ENCODE measurements at regions of chr17 and their contacts with region 1.

Region 1: DNA sequence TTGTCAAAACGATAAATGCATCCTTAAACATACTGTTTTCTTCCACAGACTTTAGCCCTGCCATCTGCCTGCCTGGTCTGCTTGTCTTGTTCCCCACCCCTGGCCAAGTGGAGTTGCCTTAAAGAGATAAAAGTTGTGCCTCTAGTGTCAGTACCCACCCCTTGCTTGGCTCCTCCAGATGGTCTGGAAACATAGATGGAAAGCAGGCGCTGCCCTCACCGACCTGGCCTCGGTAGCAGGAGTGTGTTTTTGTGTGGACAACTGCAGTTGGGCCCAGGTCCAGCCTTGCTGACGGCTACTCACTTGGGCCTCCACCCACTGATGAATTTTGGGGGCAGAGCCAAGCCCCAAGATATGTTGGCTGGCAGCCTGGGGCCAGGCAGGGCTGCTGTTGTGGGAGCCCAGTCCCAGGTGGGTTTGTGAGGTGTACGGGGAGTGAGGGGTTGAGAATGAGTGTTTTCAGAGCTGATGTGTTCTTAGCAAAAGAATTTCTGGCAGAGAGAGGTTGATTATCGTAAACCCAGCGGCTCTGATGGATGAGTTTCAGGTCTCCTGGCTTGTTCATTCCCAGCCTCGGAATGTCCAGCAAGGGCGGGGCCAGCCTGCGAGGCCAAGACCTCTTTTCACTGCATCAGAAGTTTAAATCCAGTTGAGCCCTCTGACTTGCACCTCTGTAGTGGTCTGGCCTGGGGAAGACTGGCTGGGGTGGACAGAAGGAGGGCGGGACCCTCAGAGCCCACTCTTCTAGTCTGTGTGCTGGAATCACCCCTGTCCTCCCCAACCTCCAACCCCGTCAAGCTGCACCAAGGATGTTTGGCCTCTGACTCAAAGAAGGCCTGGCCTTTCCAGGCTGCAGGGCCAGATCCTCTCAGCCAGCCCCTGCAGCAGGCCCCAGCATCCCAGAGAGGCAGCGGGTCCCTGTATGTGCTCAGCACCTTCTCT is 179.7 kb downstream of the RAB11FIP4 start:
- DNase-seq: peak; percentile 90

Region 2: GRCh38 chr17:31696184-31696602 is 125.0 kb after region 1 on chr17:
- intact Hi-C with region 1: loop called (anchors 2 kb)
- DNase-seq: peak; percentile 88